Activated naive CD4-positive, alpha-beta T cell treated with anti-CD3 and anti-CD28 coated beads for 36 hours (primary cell): ENCODE measurements at regions of chr2 and their contacts with region 1.

Region 1: DNA sequence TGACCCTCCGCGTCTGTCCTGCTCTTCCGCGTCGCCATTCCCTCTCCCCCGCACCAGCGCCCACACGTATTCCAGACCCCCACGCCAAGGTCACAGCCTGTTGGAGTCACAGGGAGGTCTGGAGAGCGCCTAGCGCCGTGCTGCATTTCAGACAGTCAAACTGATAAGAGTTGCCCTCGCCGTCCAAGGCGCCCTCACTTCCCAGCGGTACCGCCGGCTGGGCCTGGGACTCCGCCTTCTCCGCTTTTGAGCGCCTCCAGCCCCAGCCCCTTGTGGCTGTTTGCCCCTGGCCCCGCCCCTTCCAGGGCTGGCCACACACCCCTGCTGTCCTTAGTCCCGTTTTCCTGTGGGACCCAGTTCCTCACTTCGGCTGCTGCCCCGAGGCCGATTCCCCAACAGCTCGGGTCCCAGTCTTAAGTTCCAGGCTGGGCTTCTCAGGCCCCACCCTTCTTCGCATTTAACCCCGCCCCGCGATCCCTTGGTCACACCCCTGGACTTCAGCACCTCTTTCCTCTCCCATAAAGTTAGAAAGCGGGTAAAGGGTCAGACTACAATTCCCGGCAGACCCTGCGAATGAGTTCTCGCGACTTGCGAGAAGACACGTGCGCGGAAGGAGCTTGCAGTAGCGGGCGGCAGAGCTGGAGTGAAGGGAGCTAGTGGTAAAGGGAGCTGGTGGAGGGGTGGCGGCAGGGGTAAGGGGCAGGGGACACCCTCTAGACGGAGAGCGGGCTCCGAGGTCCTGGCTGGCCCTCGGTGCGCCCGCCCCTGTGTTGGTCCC is at the start of gene GMPPA:
- DNase-seq: peak; percentile 98
- H3K4me3 Mint-ChIP-seq: peak within 1 kb of the TSS; percentile 91
- H3K27ac Mint-ChIP-seq: peak within 1 kb of the TSS; percentile 39
- H3K4me1 Mint-ChIP-seq: peaks cover 28% of the 10 kb centered on the region
- H3K27me3 Mint-ChIP-seq: peaks cover 43% of the 10 kb centered on the region
- total RNA-seq, gene GMPPA: 25.2 to 28.4 TPM

Region 2: GRCh38 chr2:219155054-219155644 is 343.3 kb before region 1 on chr2:
- CTCF ChIA-PET with region 1: no interaction called
- intact Hi-C with region 1: no loop called
- DNase-seq: peak; percentile 40
- H3K4me3 Mint-ChIP-seq: no peak overlapping the region
- H3K27ac Mint-ChIP-seq: no peak overlapping the region
- H3K4me1 Mint-ChIP-seq: peaks cover 7% of the 10 kb centered on the region
- H3K27me3 Mint-ChIP-seq: no peaks in the 10 kb centered on the region

Region 3: GRCh38 chr2:219253753-219254590 is 244.5 kb before region 1 on chr2 and contains the start of gene TUBA4A:
- CTCF ChIA-PET with region 1: no interaction called
- intact Hi-C with region 1: loop called (anchors 1 kb)
- DNase-seq: peak; percentile 89
- H3K4me3 Mint-ChIP-seq: peak within 1 kb of the TSS; percentile 70
- H3K27ac Mint-ChIP-seq: peak within 1 kb of the TSS; percentile 95
- H3K4me1 Mint-ChIP-seq: peaks cover 49% of the 10 kb centered on the region
- H3K27me3 Mint-ChIP-seq: no peaks in the 10 kb centered on the region
- total RNA-seq, gene TUBA4A: 112 to 116 TPM

Region 4: DNA sequence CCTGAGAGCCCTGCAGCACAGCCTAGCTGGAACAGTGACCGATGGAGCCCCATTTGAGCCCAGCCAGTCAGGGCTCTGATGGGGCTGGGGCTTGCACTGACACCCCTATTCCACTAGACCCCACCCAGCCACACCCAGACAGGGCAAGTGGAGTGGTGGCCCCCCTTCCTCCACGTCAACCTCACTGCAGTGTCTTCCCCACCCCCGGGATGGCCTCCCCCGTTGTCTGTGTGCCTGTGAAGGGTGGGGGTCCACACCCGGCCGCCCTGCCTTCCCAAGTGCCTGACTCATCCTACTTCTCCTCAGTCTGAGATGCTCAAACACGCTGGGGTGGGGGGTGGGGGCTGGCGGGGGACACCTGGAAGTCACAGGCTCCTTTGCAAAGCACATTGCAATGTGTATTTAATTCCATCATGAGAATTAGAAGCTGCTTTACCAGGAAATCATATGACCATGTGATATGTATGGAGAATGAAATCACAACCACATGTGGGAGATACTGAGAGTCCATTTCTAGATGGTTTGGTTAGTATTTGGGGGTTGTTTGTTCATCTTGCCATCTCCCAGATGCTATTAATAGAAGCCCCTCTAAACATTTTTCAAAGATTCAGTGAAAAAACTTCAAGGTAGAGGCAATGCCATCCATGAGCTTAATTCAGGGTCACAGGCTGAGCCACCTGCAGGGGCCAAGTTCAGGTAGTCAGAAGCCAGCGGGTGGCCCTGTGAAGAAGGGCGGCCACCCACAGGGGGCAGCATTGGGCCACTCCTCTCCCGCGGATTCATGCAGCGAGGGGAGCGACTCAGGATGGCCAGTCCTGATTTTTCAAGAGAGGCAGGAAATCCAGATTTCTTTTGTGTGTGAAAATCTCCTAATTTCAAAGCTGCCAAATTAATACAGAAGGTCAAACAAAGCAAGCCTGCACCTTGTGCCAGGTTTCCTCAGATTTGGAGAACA is 22.5 kb before region 1 on chr2:
- CTCF ChIA-PET with region 1: interaction called, 13 read pairs
- intact Hi-C with region 1: no loop called
- DNase-seq: peak; percentile 80
- H3K4me3 Mint-ChIP-seq: no peak overlapping the region
- H3K27ac Mint-ChIP-seq: no peak overlapping the region
- H3K4me1 Mint-ChIP-seq: peaks cover 4% of the 10 kb centered on the region
- H3K27me3 Mint-ChIP-seq: peaks cover 2% of the 10 kb centered on the region

Region 5: DNA sequence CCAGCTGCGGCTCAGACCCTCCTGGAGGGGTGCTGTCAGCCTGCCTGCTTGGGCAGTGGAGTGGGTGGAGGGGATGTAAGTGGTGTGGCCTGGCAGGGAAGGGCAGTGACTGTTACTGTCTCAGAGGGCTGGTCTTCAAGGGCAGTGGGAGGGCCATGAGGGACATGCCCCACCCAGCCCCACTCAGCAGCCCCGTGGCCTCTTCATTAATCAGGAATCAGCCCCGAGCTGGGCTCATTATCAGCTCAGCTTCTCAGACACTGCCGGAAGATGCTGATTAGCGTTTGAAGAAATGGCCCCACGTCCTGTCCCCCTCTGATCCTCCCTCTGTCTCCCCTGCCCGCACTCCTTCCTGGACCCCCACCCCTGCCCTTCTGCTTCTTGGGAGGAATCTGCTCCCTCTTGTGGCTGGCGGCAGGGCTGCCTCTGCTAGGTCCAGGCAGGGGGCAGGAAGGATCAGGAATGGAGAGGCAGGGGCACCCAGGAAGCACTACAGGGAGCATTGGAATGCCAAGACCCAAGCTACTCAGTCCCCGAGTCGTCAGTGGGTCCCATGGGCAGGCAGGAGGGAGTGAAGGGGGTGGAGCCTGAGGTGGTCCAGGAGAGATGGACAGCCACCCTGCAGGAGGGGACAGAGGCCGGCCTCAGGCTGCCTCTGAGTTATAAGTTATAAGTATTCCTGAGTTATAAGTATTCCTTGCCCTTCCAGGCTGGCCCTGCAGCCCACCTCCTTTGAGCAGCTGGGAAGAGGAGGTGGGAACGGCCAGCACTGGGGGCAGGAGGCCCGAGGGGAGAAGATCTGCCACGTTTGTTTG is 22.8 kb after region 1 on chr2:
- CTCF ChIA-PET with region 1: interaction called, 211 read pairs
- intact Hi-C with region 1: loop called (anchors 1 kb)
- DNase-seq: peak; percentile 34
- H3K4me3 Mint-ChIP-seq: no peak overlapping the region
- H3K27ac Mint-ChIP-seq: no peak overlapping the region
- H3K4me1 Mint-ChIP-seq: peaks cover 14% of the 10 kb centered on the region
- H3K27me3 Mint-ChIP-seq: peaks cover 64% of the 10 kb centered on the region

Region 6: GRCh38 chr2:219552382-219553167 is 54.1 kb after region 1 on chr2:
- CTCF ChIA-PET with region 1: interaction called, 6 read pairs
- intact Hi-C with region 1: loop called (anchors 1 kb)
- DNase-seq: peak; percentile 82
- H3K4me3 Mint-ChIP-seq: peak overlapping the region; percentile 76
- H3K27ac Mint-ChIP-seq: no peak overlapping the region
- H3K4me1 Mint-ChIP-seq: peaks cover 8% of the 10 kb centered on the region
- H3K27me3 Mint-ChIP-seq: peaks cover 31% of the 10 kb centered on the region

Region 7: GRCh38 chr2:219689676-219690628 is 191.5 kb after region 1 on chr2:
- CTCF ChIA-PET with region 1: interaction called, 4 read pairs
- intact Hi-C with region 1: loop called (anchors 1 kb)
- DNase-seq: peak; percentile 71
- H3K4me3 Mint-ChIP-seq: no peak overlapping the region
- H3K27ac Mint-ChIP-seq: no peak overlapping the region
- H3K4me1 Mint-ChIP-seq: peaks cover 7% of the 10 kb centered on the region
- H3K27me3 Mint-ChIP-seq: peaks cover 21% of the 10 kb centered on the region